Aorta (tissue), 5 donors: ENCODE measurements at regions of chr17 and their contacts with region 1.

Region 1: DNA sequence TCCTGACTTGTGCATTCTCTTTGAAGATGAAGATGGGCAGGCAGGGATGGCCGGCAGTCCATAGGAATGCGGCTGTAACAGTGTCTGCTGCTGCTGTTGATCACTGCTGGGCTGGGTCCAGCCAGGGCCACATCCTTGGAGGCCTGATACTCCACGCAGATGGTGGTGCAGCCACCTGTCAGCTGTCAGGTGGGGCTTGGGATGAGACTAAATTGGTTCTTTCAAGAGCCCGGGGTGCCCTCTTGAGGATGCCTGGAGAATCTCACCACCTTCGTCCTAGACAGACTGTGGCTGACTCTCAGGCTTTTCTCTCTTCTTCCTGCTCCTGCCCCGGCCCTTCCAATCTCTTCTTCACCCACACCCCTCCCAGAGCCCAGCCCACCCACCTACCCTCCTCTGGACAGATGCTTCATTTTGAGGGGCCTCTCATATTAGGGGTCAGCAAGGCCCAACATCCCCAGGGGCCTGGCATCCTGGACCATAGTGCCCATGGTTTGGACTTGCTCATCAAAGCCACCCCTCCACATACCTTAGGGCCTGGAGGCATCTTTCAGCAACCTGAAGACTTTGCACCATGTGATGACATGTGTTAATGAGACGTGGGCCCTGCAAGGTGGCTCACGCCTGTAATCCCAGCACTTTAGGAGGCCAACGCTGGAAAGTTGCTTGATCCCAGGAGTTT is 19.1 kb downstream of the OSBPL7 start:
- DNase-seq: peak in 1 of 2 donors; percentile 46
- ATAC-seq: peak; percentile 12
- H3K4me3 ChIP-seq: no peak overlapping the region
- H3K27ac ChIP-seq: no peak overlapping the region
- H3K4me1 ChIP-seq: no peaks in the 10 kb centered on the region
- H3K27me3 ChIP-seq: no peaks in the 10 kb centered on the region

Region 2: GRCh38 chr17:47698749-47699535 is 103.5 kb before region 1 on chr17:
- intact Hi-C with region 1: loop called (anchors 10 kb)
- DNase-seq: peak in 1 of 2 donors; percentile 88
- ATAC-seq: no peak
- H3K4me3 ChIP-seq: no peak overlapping the region
- H3K27ac ChIP-seq: no peak overlapping the region
- H3K4me1 ChIP-seq: no peaks in the 10 kb centered on the region
- H3K27me3 ChIP-seq: no peaks in the 10 kb centered on the region

Region 3: DNA sequence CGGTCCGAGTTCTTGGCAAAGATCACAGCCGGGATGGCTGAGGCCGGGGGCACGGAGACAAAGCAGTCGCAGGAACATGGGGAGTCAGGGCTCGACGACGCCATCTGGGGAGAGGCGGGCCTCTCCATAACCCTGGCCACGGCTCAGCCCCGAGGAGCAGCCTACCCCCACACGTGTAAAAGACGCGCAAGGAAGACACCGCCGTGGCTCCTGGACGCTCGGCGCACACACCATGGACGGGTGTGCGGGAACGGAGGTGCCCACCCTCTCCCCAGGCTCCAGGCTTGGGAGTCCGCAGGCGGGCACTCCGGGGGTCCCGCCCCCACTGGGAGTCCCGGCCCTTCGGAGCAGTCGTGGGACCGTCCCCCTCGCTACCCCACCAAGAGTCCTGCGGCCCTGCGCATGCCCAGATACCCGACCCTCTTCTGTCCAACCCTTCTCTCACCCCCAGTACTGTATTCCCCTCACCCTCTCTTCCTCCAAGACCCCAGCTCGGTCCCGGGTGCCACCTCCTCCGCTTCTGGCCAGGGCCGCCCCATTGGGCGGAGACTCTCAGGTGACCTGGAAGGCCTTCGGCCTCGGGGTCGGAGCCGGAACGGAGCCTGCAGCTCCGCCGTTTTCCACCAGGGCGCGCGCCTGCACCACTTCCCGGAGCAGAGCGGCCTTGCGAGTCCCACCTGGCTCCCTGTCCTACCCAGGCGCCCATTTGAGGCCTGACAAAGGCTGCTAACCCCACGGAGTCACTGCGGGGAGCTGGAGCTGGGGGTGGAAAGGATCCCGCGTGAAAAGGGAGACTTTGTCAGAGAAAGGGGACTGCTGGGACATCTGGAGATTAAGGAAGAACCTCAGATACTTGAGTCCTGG is 38.5 kb after region 1 on chr17 and contains the start of gene SCRN2:
- intact Hi-C with region 1: no loop called
- DNase-seq: peak; percentile 92 to 96
- ATAC-seq: peak; percentile 95
- H3K4me3 ChIP-seq: peak within 1 kb of the TSS; percentile 36 to 54
- H3K27ac ChIP-seq: no peak within 1 kb of the TSS
- H3K4me1 ChIP-seq: no peaks in the 10 kb centered on the region
- H3K27me3 ChIP-seq: no peaks in the 10 kb centered on the region
- total RNA-seq, gene SCRN2: 19.3 to 37.6 TPM